Dorsolateral prefrontal cortex (tissue), 120 donors: ENCODE measurements at regions of chr20 and their contacts with region 1.

Region 1: GRCh38 chr20:64062596-64063388 is at the start of gene TCEA2:
- DNase-seq: peak; percentile 97 to 99 (median 98)
- H3K4me3 ChIP-seq: peak within 1 kb of the TSS; percentile 66 to 99 (median 94)
- H3K27ac ChIP-seq: peak within 1 kb of the TSS; percentile 29 to 97 (median 87)
- H3K27me3 ChIP-seq: no peaks in the 10 kb centered on the region
- CTCF ChIP-seq: peak in 37 of 56 donors; percentile 11 to 67 (median 30)
- total RNA-seq, gene TCEA2: 105 to 197 (median 137) TPM

Region 2: DNA sequence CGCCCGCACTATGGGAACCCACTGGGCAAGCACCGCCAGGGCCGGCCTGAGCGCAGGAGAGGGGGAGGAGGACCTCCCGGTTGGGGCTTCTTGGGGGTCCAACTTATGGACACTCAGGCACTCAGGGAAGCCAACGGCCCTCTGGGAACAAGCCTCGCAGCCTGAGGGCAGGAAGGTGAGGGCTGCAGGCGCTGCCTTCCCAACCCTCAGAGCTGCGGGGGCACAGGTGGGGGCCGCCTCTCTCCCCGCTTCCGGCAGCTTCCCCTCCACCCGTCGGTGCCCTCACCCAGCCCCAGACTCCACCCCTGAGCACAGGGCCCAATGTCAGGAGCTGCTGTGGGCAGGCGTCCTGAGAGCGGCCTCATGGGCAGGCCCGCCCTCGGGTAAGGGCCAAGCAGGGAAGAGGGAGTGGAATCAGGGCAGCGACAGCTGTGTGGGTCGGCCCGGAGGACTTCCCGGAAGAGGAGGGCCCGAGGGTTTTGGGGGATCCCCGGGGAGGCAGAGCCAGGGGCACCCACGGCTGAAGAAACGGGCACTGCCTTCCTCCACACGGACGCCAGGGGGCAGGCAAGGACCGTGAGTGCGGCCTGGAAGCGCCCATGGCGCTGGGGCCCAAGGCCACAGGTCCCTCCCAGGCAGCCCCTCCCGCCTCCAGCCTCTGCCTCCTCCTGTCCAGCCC is 525.1 kb before region 1 on chr20:
- intact Hi-C with region 1: loop called in 1 of 2 experiments (anchors 10 kb)
- DNase-seq: peak in 9 of 10 donors; percentile 61 to 86 (median 66)
- H3K4me3 ChIP-seq: peak overlapping the region in 42 of 59 donors; percentile 0 to 51 (median 29)
- H3K27ac ChIP-seq: peak overlapping the region in 6 of 59 donors; percentile 9 to 56 (median 36)
- H3K27me3 ChIP-seq: peaks cover 0 to 15% (median 0%) of the 10 kb centered on the region in 45 donors
- CTCF ChIP-seq: peak; percentile 81 to 98 (median 96)

Region 3: GRCh38 chr20:63782051-63782471 is 280.7 kb before region 1 on chr20:
- intact Hi-C with region 1: no loop called
- DNase-seq: no peak
- H3K4me3 ChIP-seq: no peak overlapping the region
- H3K27ac ChIP-seq: peak overlapping the region in 9 of 59 donors; percentile 5 to 84 (median 30)
- H3K27me3 ChIP-seq: no peaks in the 10 kb centered on the region
- CTCF ChIP-seq: peak in 2 of 56 donors; percentile 18 to 22

Region 4: GRCh38 chr20:63894358-63895201 is 168.2 kb before region 1 on chr20 and contains the start of gene DNAJC5:
- intact Hi-C with region 1: loop called in 1 of 2 experiments (anchors 10 kb)
- DNase-seq: peak; percentile 89 to 98 (median 94)
- H3K4me3 ChIP-seq: peak within 1 kb of the TSS; percentile 42 to 89 (median 76)
- H3K27ac ChIP-seq: peak within 1 kb of the TSS in 55 of 59 donors; percentile 13 to 90 (median 73)
- H3K27me3 ChIP-seq: no peaks in the 10 kb centered on the region
- CTCF ChIP-seq: peak in 24 of 56 donors; percentile 8 to 53 (median 28)
- total RNA-seq, gene DNAJC5: 69.5 to 175 (median 137) TPM

Region 5: GRCh38 chr20:63973636-63974402 is 89.0 kb before region 1 on chr20:
- intact Hi-C with region 1: loop called (anchors 5 kb)
- DNase-seq: peak; percentile 67 to 92 (median 86)
- H3K4me3 ChIP-seq: peak overlapping the region in 55 of 59 donors; percentile 7 to 63 (median 38)
- H3K27ac ChIP-seq: peak overlapping the region in 53 of 59 donors; percentile 6 to 88 (median 61)
- H3K27me3 ChIP-seq: peaks cover 0 to 13% (median 0%) of the 10 kb centered on the region in 45 donors
- CTCF ChIP-seq: peak; percentile 90 to 100 (median 98)

Region 6: GRCh38 chr20:64038565-64039292 is 24.1 kb before region 1 on chr20:
- intact Hi-C with region 1: loop called in 1 of 2 experiments (anchors 2 kb)
- DNase-seq: peak in 3 of 10 donors; percentile 20 to 76 (median 66)
- H3K4me3 ChIP-seq: peak overlapping the region in 57 of 59 donors; percentile 14 to 63 (median 42)
- H3K27ac ChIP-seq: peak overlapping the region in 7 of 59 donors; percentile 26 to 87 (median 53)
- H3K27me3 ChIP-seq: peaks cover 0 to 78% (median 58%) of the 10 kb centered on the region in 45 donors
- CTCF ChIP-seq: peak in 52 of 56 donors; percentile 32 to 75 (median 56)

Region 7: DNA sequence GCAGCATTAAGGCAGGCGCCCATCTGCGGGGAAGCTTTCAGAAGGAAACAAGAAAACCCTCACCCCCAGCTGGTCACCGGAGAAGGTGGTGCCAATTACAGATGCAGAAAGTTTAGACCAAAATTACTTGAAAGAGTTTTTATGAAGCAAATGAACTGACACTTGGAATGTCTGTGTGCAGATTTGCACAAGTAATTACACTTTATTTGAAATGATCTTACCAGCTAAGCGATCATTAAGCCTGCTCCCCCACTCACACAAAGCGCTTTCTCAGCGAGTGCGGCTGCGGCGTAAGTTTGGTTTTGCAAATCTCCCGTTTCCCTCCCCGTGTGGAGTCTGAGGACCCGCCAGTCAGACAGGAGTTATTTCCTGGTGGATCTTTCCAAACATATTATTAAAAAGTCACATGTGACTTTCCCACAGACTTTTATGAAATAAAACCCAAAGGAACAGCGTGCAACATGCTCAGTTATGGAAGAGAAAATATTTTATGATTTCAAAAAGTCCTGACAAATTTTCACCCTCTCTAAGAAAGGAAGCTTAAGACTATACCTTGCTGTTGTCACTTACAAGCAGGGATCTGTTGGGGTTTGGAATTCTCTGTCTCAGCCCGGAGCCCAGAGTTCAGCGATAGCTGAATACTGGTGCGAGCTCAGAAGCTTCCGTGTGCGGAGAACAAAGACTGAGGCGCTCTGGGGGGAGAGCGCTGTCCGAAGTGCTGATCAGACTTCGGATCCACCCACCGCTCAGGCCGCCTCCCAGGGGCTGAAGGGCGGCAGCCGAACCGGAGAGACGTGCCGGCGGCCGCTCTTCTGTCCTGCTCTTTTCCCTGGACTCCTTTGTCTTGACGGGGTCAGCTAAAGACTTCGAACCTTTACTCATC is 98.8 kb after region 1 on chr20:
- intact Hi-C with region 1: no loop called
- DNase-seq: peak in 1 of 10 donors; percentile 29
- H3K4me3 ChIP-seq: peak overlapping the region in 9 of 59 donors; percentile 0 to 12 (median 5)
- H3K27ac ChIP-seq: peak overlapping the region in 1 of 59 donors; percentile 13
- H3K27me3 ChIP-seq: peaks cover 0 to 88% (median 73%) of the 10 kb centered on the region in 45 donors
- CTCF ChIP-seq: no peak